CD8-positive, alpha-beta T cell (primary cell): ENCODE measurements at regions of chr11 and their contacts with region 1.

Region 1: GRCh38 chr11:111283945-111284481 is 14.3 kb upstream of the POU2AF3 start:
- DNase-seq: no peak
- ATAC-seq: no peak
- H3K4me3 ChIP-seq: no peak overlapping the region
- H3K4me3 Mint-ChIP-seq: no peak overlapping the region
- H3K27ac ChIP-seq: no peak overlapping the region
- H3K27ac Mint-ChIP-seq: no peak overlapping the region
- H3K4me1 ChIP-seq: no peaks in the 10 kb centered on the region
- H3K4me1 Mint-ChIP-seq: no peaks in the 10 kb centered on the region
- H3K27me3 ChIP-seq: no peaks in the 10 kb centered on the region
- H3K27me3 Mint-ChIP-seq: no peaks in the 10 kb centered on the region
- CTCF ChIP-seq: no peak

Region 2: GRCh38 chr11:111177037-111177871 is 106.8 kb before region 1 on chr11:
- CTCF ChIA-PET with region 1: no interaction called
- POLR2A ChIA-PET with region 1: no interaction called
- intact Hi-C with region 1: no loop called
- DNase-seq: peak in 1 of 9 experiments; percentile 14
- ATAC-seq: no peak
- H3K4me3 ChIP-seq: no peak overlapping the region
- H3K4me3 Mint-ChIP-seq: no peak overlapping the region
- H3K27ac ChIP-seq: no peak overlapping the region
- H3K27ac Mint-ChIP-seq: no peak overlapping the region
- H3K4me1 ChIP-seq: no peaks in the 10 kb centered on the region
- H3K4me1 Mint-ChIP-seq: no peaks in the 10 kb centered on the region
- H3K27me3 ChIP-seq: no peaks in the 10 kb centered on the region
- H3K27me3 Mint-ChIP-seq: no peaks in the 10 kb centered on the region
- CTCF ChIP-seq: no peak

Region 3: GRCh38 chr11:111253116-111253515 is 30.9 kb before region 1 on chr11:
- CTCF ChIA-PET with region 1: no interaction called
- POLR2A ChIA-PET with region 1: no interaction called
- intact Hi-C with region 1: no loop called
- DNase-seq: no peak
- ATAC-seq: no peak
- H3K4me3 ChIP-seq: no peak overlapping the region
- H3K4me3 Mint-ChIP-seq: no peak overlapping the region
- H3K27ac ChIP-seq: no peak overlapping the region
- H3K27ac Mint-ChIP-seq: no peak overlapping the region
- H3K4me1 ChIP-seq: no peaks in the 10 kb centered on the region
- H3K4me1 Mint-ChIP-seq: no peaks in the 10 kb centered on the region
- H3K27me3 ChIP-seq: peaks cover 0 to 8% of the 10 kb centered on the region in 2 experiments
- H3K27me3 Mint-ChIP-seq: peaks cover 14% of the 10 kb centered on the region
- CTCF ChIP-seq: no peak

Region 4: GRCh38 chr11:111272420-111272819 is 11.6 kb before region 1 on chr11:
- CTCF ChIA-PET with region 1: interaction called, 16 read pairs
- POLR2A ChIA-PET with region 1: no interaction called
- intact Hi-C with region 1: no loop called
- DNase-seq: no peak
- ATAC-seq: no peak
- H3K4me3 ChIP-seq: no peak overlapping the region
- H3K4me3 Mint-ChIP-seq: no peak overlapping the region
- H3K27ac ChIP-seq: no peak overlapping the region
- H3K27ac Mint-ChIP-seq: no peak overlapping the region
- H3K4me1 ChIP-seq: no peaks in the 10 kb centered on the region
- H3K4me1 Mint-ChIP-seq: peaks cover 5% of the 10 kb centered on the region
- H3K27me3 ChIP-seq: no peaks in the 10 kb centered on the region
- H3K27me3 Mint-ChIP-seq: peaks cover 6% of the 10 kb centered on the region
- CTCF ChIP-seq: no peak

Region 5: DNA sequence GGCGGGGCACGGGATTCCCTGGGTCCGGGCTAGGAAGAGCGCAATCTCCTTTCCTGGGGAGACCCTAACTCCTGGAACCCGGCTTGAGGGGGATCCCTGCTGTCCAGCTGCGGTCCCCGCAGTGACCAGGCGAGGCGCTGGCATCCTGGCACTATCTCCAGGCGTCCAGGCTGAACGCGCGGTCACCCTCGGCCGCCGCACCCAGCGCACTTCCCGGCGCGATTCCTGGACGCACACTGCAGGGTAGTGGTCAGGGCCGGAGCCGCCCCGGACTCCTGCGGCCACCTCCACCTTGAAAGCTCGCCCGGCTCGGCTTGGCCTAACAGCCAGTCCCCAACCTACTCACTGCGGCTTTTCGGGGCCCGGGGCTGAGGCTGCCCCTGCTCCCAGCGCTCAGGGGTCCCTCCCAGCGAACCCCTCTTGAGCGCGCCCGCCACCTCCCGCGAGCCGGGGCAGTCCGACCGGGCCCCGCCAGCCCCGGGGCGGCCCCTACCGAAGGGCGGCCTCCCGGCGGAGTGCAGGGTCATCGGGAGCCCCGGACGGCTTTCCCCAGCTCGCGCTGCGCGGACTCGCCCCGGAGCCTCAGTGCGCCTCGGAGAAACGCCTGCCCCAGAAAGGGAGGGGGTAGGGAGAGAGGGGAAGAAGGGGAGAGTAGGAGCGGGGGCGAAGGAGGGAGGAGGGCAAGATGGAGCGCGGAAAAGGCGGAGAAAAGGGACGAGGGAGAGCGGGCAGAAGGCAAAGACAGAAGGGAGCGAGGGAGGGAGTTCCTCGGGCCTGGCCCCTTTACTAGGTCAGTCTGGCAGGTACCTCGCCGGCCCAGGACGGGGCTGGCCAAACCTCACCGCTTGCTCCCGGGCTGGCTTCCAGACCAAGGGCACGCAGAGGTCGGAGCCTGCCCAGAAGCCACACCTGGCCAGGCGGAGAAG is 15.4 kb after region 1 on chr11:
- CTCF ChIA-PET with region 1: no interaction called
- POLR2A ChIA-PET with region 1: no interaction called
- intact Hi-C with region 1: no loop called
- DNase-seq: no peak
- ATAC-seq: no peak
- H3K4me3 ChIP-seq: no peak overlapping the region
- H3K4me3 Mint-ChIP-seq: no peak overlapping the region
- H3K27ac ChIP-seq: no peak overlapping the region
- H3K27ac Mint-ChIP-seq: no peak overlapping the region
- H3K4me1 ChIP-seq: no peaks in the 10 kb centered on the region
- H3K4me1 Mint-ChIP-seq: peaks cover 5% of the 10 kb centered on the region
- H3K27me3 ChIP-seq: no peaks in the 10 kb centered on the region
- H3K27me3 Mint-ChIP-seq: peaks cover 35% of the 10 kb centered on the region
- CTCF ChIP-seq: no peak

Region 6: DNA sequence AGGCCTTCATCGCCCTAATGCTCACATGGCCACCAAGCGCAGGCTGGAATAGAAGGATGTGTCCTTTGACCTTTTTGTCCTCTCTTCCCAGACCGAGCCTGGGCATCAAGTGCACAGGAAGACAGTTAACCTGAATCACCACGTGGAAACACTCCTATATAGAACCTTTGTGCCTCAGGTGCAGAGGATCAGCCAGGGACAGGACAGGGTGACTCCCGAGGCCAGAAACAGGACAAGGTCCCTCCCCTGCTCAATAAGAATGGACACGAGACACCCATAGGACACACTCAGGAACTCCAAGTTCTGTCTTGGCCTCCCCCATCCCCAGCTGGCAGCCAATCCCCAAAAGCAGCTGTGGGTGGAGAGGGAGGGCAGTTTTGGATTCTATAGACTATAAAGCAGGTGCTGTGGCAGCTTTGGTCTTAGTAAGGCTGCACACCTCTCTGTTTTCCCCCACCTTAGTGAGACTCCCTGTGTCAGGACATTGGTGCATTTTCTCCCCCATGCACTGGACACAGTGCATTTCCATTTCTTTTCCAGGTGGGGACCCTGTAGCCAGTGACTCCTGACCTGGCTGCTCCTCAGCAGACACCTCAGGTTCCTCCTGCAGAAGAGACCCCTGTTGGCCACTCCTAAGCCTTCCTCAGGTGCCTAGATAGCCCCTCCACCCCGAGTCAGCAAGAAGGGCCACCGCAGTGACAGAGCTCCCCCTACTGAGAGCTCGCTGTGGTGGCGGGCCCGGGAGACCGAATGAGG is 138.7 kb after region 1 on chr11:
- CTCF ChIA-PET with region 1: interaction called, 121 read pairs
- POLR2A ChIA-PET with region 1: no interaction called
- intact Hi-C with region 1: loop called (anchors 1 kb)
- DNase-seq: peak in 8 of 9 experiments; percentile 26 to 64 (median 40)
- ATAC-seq: peak; percentile 54
- H3K4me3 ChIP-seq: no peak overlapping the region
- H3K4me3 Mint-ChIP-seq: no peak overlapping the region
- H3K27ac ChIP-seq: no peak overlapping the region
- H3K27ac Mint-ChIP-seq: no peak overlapping the region
- H3K4me1 ChIP-seq: peaks cover 5% of the 10 kb centered on the region
- H3K4me1 Mint-ChIP-seq: peaks cover 13% of the 10 kb centered on the region
- H3K27me3 ChIP-seq: no peaks in the 10 kb centered on the region
- H3K27me3 Mint-ChIP-seq: peaks cover 2% of the 10 kb centered on the region
- CTCF ChIP-seq: peak; percentile 35

Region 7: GRCh38 chr11:111441443-111441842 is 157.4 kb after region 1 on chr11:
- CTCF ChIA-PET with region 1: interaction called, 89 read pairs
- POLR2A ChIA-PET with region 1: interaction called, 3 read pairs
- intact Hi-C with region 1: loop called (anchors 1 kb)
- DNase-seq: no peak
- ATAC-seq: no peak
- H3K4me3 ChIP-seq: no peak overlapping the region
- H3K4me3 Mint-ChIP-seq: no peak overlapping the region
- H3K27ac ChIP-seq: no peak overlapping the region
- H3K27ac Mint-ChIP-seq: no peak overlapping the region
- H3K4me1 ChIP-seq: peaks cover 14% of the 10 kb centered on the region
- H3K4me1 Mint-ChIP-seq: peaks cover 21% of the 10 kb centered on the region
- H3K27me3 ChIP-seq: no peaks in the 10 kb centered on the region
- H3K27me3 Mint-ChIP-seq: no peaks in the 10 kb centered on the region
- CTCF ChIP-seq: no peak

Region 8: DNA sequence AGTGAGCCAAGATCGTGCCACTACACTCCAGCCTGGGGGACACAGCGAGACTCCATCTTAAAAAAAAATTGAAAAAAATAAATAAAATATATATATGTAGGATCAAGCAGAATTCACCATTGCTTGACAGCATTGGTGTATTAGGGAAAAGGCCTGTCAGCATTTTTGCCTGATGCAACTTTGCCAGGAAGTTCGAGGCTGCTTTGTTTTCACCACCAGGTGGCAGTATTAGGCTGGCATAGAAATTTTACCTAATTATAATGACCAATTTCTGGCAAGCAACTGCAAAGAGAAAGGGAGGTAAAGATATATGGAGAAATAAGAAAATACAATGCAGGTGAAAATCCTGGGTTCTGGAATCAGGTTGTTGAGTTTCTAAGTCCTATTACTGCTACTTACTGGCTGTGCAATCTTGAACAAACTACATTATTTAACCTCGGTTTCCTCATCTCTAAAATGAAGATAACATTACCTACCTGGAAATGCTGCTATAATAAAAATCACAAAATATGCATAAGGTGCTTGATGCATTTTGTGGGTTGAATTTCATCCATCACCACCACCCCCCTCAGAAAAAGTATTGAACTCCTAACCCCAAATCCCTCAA is 281.2 kb after region 1 on chr11:
- CTCF ChIA-PET with region 1: no interaction called
- POLR2A ChIA-PET with region 1: no interaction called
- intact Hi-C with region 1: loop called in 1 of 2 experiments (anchors 10 kb)
- DNase-seq: peak; percentile 17 to 74 (median 63)
- ATAC-seq: no peak
- H3K4me3 ChIP-seq: no peak overlapping the region
- H3K4me3 Mint-ChIP-seq: no peak overlapping the region
- H3K27ac ChIP-seq: no peak overlapping the region
- H3K27ac Mint-ChIP-seq: no peak overlapping the region
- H3K4me1 ChIP-seq: no peaks in the 10 kb centered on the region
- H3K4me1 Mint-ChIP-seq: no peaks in the 10 kb centered on the region
- H3K27me3 ChIP-seq: no peaks in the 10 kb centered on the region
- H3K27me3 Mint-ChIP-seq: no peaks in the 10 kb centered on the region
- CTCF ChIP-seq: peak; percentile 98